PC-3 (cell line): ENCODE measurements at regions of chr1 and their contacts with region 1.

Region 1: GRCh38 chr1:183281553-183282091 is 95.6 kb downstream of the LAMC2 start:
- DNase-seq: peak; percentile 90
- ATAC-seq: peak; percentile 62
- H3K4me3 ChIP-seq: no peak overlapping the region
- H3K27ac ChIP-seq: no peak overlapping the region
- H3K4me1 ChIP-seq: peaks cover 34% of the 10 kb centered on the region
- H3K27me3 ChIP-seq: no peaks in the 10 kb centered on the region
- CTCF ChIP-seq: peak; percentile 80

Region 2: DNA sequence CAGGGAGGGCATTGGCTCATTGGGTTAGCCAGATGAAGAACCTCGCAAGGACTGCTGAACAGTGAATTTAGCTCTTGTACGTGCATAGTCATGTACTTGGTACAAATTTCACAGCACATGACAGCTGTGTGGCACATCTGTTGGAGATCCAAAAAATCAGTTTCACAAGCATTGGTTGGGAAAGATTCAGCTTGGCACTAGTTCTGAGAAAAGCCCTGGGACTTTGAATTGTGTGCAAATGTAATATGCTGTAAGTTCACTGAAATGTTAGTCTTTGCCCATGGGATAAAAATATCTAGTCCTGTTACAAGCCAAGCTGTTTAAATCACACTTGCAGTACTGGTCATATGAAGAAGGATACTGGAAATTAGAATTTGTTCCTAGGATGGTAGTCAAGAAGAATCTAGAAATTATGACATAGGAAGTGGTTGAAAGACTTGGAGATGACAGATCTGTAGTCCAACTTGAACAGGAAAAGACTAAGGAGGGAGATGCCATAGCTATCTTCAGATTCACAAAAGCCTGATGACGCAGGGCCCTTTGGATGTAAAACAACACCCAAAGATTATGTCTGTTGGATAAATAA is 76.3 kb before region 1 on chr1:
- CTCF ChIA-PET with region 1: no interaction called
- POLR2A ChIA-PET with region 1: no interaction called
- intact Hi-C with region 1: no loop called
- DNase-seq: no peak
- ATAC-seq: no peak
- H3K4me3 ChIP-seq: no peak overlapping the region
- H3K27ac ChIP-seq: no peak overlapping the region
- H3K4me1 ChIP-seq: peaks cover 22% of the 10 kb centered on the region
- H3K27me3 ChIP-seq: no peaks in the 10 kb centered on the region
- CTCF ChIP-seq: no peak

Region 3: GRCh38 chr1:183218971-183219615 is 62.5 kb before region 1 on chr1:
- CTCF ChIA-PET with region 1: no interaction called
- POLR2A ChIA-PET with region 1: no interaction called
- intact Hi-C with region 1: no loop called
- DNase-seq: no peak
- ATAC-seq: no peak
- H3K4me3 ChIP-seq: no peak overlapping the region
- H3K27ac ChIP-seq: no peak overlapping the region
- H3K4me1 ChIP-seq: no peaks in the 10 kb centered on the region
- H3K27me3 ChIP-seq: no peaks in the 10 kb centered on the region
- CTCF ChIP-seq: no peak

Region 4: GRCh38 chr1:183318433-183318832 is 36.8 kb after region 1 on chr1:
- CTCF ChIA-PET with region 1: no interaction called
- POLR2A ChIA-PET with region 1: no interaction called
- intact Hi-C with region 1: loop called (anchors 1 kb)
- DNase-seq: peak; percentile 60
- ATAC-seq: peak; percentile 91
- H3K4me3 ChIP-seq: no peak overlapping the region
- H3K27ac ChIP-seq: peak overlapping the region; percentile 32; the same call in 1 of the 2 replicates
- H3K4me1 ChIP-seq: peaks cover 27% of the 10 kb centered on the region
- H3K27me3 ChIP-seq: no peaks in the 10 kb centered on the region
- CTCF ChIP-seq: peak; percentile 52

Region 5: GRCh38 chr1:183543619-183544204 is 262.1 kb after region 1 on chr1:
- CTCF ChIA-PET with region 1: no interaction called
- POLR2A ChIA-PET with region 1: no interaction called
- intact Hi-C with region 1: loop called (anchors 2 kb)
- DNase-seq: peak; percentile 66
- ATAC-seq: peak; percentile 97
- H3K4me3 ChIP-seq: no peak overlapping the region
- H3K27ac ChIP-seq: no peak overlapping the region
- H3K4me1 ChIP-seq: 0 out of 2 replicates have a peak, but pooled peaks cover 4% of the 10 kb centered on the region
- H3K27me3 ChIP-seq: no peaks in the 10 kb centered on the region
- CTCF ChIP-seq: peak; percentile 74

Region 6: GRCh38 chr1:183622884-183623785 is 341.5 kb after region 1 on chr1:
- CTCF ChIA-PET with region 1: no interaction called
- POLR2A ChIA-PET with region 1: no interaction called
- intact Hi-C with region 1: loop called (anchors 1 kb)
- DNase-seq: peak; percentile 70
- ATAC-seq: peak; percentile 78
- H3K4me3 ChIP-seq: no peak overlapping the region
- H3K27ac ChIP-seq: peak overlapping the region; percentile 63
- H3K4me1 ChIP-seq: peaks cover 32% of the 10 kb centered on the region
- H3K27me3 ChIP-seq: no peaks in the 10 kb centered on the region
- CTCF ChIP-seq: peak; percentile 87